Activated CD4-positive, alpha-beta T cell treated with anti-CD3 and anti-CD28 coated beads, Interleukin-2, amount 10 ng/mL, durations not matched to agents 24 days and 14 days (primary cell): ENCODE measurements at regions of chr2 and their contacts with region 1.

Region 1: GRCh38 chr2:224520064-224520463 is 65.1 kb downstream of the CUL3 start:
- DNase-seq: peak; percentile 74
- H3K4me3 Mint-ChIP-seq: no peak overlapping the region
- H3K27ac Mint-ChIP-seq: peak overlapping the region; percentile 50
- H3K4me1 Mint-ChIP-seq: peaks cover 45% of the 10 kb centered on the region
- H3K27me3 Mint-ChIP-seq: no peaks in the 10 kb centered on the region

Region 2: DNA sequence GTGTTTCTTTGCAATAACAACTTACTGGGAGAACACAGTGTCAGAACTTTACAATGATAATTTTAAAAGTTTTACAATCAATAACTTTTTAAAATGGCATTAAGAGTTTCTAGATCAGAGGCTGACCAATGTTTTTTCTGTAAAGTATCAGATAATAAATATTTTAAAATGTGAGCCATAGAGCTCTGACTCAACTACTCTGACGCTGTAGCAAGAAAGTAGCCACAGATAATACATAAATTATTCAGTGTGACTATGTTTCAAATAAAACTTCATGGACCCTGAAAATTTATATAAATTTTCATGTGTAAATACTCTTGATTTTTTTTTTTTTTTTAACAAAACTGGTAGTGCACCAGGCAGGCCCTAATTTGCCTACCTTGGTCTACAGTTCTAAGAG is 12.3 kb before region 1 on chr2:
- intact Hi-C with region 1: loop called (anchors 2 kb)
- DNase-seq: no peak
- H3K4me3 Mint-ChIP-seq: no peak overlapping the region
- H3K27ac Mint-ChIP-seq: no peak overlapping the region
- H3K4me1 Mint-ChIP-seq: peaks cover 6% of the 10 kb centered on the region
- H3K27me3 Mint-ChIP-seq: no peaks in the 10 kb centered on the region